Endothelial cell of umbilical vein (primary cell): ENCODE measurements at regions of chr11 and their contacts with region 1.

Region 1: DNA sequence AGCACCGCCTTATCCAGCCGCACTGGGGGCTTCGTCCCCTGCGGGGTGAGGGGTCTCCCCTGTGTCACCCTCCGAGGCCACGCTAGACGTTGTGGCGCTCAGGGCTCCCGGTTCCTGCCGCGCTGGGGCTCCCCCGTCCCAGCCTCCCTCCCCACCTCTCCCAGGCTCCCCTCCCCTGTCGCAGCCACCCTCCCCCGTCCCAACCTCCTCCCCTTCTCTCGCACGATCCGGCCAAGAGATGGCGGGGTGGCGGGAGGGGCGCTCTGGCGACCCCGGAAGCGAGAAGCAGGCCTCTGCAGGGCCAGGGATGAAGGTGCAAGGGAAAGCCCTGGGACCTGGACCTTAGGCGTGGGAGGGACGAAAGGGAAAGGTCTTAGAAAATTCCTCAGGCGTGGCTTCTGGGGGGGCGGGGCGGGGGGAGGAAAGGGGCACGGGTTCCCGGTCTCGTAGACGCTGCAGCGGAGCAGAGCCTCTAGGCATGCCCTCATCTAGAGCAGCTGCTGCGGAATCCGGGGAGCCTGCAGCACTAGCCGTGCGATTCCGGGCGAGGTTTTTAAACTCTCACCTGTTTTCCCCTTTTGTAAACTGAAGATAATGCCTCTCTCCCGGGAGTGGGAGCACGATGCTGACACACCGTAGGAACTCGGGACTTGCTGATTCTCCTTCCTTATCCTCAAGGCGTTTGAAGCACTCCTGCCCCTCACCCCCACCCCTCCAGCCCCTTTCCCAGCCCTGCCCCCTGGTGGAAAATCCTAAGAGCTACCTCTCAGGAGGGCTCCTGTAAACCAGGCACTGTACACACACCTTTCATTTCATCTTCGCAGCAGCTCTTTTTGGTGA is 14.4 kb downstream of the KCNJ5 start:
- DNase-seq: no peak
- H3K4me3 ChIP-seq: peak overlapping the region in 1 of 3 experiments; percentile 40
- H3K27ac ChIP-seq: no peak overlapping the region
- H3K4me1 ChIP-seq: peaks cover 17% of the 10 kb centered on the region
- H3K27me3 ChIP-seq: peaks cover 22 to 23% of the 10 kb centered on the region in 2 experiments
- CTCF ChIP-seq: peak; percentile 19 to 41
- POLR2A ChIP-seq: no peak

Region 2: GRCh38 chr11:128658502-128658901 is 247.1 kb before region 1 on chr11:
- CTCF ChIA-PET with region 1: no interaction called
- POLR2A ChIA-PET with region 1: no interaction called
- dilution Hi-C with region 1: no loop called
- intact Hi-C with region 1: no loop called
- DNase-seq: no peak
- H3K4me3 ChIP-seq: no peak overlapping the region
- H3K27ac ChIP-seq: no peak overlapping the region
- H3K4me1 ChIP-seq: no peaks in the 10 kb centered on the region
- H3K27me3 ChIP-seq: peaks cover 0 to 6% of the 10 kb centered on the region in 2 experiments
- CTCF ChIP-seq: no peak
- POLR2A ChIP-seq: no peak

Region 3: GRCh38 chr11:128824191-128825049 is 81.1 kb before region 1 on chr11:
- CTCF ChIA-PET with region 1: no interaction called
- POLR2A ChIA-PET with region 1: no interaction called
- dilution Hi-C with region 1: no loop called
- intact Hi-C with region 1: no loop called
- DNase-seq: no peak
- H3K4me3 ChIP-seq: no peak overlapping the region
- H3K27ac ChIP-seq: no peak overlapping the region
- H3K4me1 ChIP-seq: peaks cover 36% of the 10 kb centered on the region
- H3K27me3 ChIP-seq: no peaks in the 10 kb centered on the region
- CTCF ChIP-seq: no peak
- POLR2A ChIP-seq: no peak

Region 4: DNA sequence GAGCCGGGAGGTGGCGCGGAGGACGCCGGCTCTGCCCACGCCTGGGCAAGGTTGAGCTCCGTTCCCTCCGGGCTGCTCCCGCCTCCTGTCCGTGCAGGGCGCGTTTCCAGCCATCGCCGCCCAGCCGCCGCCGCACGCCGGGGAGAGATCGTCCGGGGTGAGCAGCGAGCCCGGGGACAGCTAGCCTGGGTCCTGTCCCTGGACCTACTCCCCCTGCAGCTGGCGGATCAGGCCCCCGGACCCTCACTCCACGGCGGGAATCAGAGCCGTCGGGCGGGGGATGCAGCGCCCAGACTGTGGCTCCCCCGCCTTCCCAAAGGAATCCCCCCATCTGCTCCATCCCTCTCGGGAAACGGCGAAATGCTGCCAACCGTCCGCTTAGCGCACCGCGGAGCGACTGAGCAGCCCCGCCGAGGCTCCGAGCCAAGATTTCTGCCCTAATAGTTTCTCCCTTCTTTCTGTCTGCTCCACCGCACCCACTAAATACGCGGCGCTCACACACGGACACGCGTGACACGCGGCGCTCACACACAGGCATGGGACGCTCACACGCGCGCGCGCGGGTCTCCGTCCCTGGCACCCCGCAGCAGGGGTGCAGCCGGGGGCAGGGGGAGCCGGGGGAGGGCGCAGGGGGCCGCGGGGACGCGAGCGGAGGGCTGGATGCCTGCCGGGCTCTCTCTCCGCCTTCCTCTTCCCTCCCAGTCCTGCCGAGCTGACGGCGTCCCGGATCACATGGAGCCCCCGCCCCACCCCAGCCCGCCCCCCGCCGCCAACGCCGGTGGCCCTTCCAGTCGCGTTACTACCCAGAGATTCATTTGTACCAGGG is 14.8 kb before region 1 on chr11 and contains the start of gene KCNJ5:
- CTCF ChIA-PET with region 1: interaction called, 141 read pairs
- POLR2A ChIA-PET with region 1: no interaction called
- dilution Hi-C with region 1: no loop called
- intact Hi-C with region 1: loop called (anchors 1 kb)
- DNase-seq: no peak
- H3K4me3 ChIP-seq: peak within 1 kb of the TSS in 2 of 3 experiments; percentile 38 to 52
- H3K27ac ChIP-seq: no peak within 1 kb of the TSS
- H3K4me1 ChIP-seq: peaks cover 5% of the 10 kb centered on the region
- H3K27me3 ChIP-seq: peaks cover 39 to 40% of the 10 kb centered on the region in 2 experiments
- CTCF ChIP-seq: no peak
- POLR2A ChIP-seq: no peak
- total RNA-seq, gene KCNJ5: 0.13 and 0.14 TPM in 2 replicates

Region 5: DNA sequence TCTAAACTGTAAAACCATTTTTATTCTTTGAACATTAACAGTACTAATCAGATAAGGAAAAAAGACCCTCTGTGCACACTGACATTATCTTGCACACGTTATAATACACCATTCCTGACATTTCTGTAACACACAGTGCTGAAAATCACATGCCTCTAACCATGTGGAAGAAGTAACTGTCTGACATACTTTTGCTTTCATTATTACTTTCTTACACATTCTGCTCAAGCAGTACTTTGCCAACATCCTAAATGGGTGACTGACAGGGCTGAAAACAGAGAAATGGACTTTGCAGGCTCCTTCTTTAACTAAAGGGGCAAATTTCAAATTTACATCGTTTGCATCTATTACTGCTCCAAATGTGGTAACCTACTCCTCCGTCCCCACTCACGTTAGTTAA is 59.9 kb after region 1 on chr11:
- CTCF ChIA-PET with region 1: interaction called, 4 read pairs
- POLR2A ChIA-PET with region 1: no interaction called
- dilution Hi-C with region 1: no loop called
- intact Hi-C with region 1: loop called (anchors 1 kb)
- DNase-seq: peak; percentile 20
- H3K4me3 ChIP-seq: no peak overlapping the region
- H3K27ac ChIP-seq: no peak overlapping the region
- H3K4me1 ChIP-seq: peaks cover 18% of the 10 kb centered on the region
- H3K27me3 ChIP-seq: no peaks in the 10 kb centered on the region
- CTCF ChIP-seq: no peak
- POLR2A ChIP-seq: no peak